ENCODE measurements at regions of chr9 and their contacts with region 1.

Region 1: GRCh38 chr9:100437860-100438805 is 11.2 kb downstream of the MSANTD3 start:
- DNase-seq: no peak
- ATAC-seq: peak; percentile 83
- H3K4me3 ChIP-seq: no peak overlapping the region
- H3K27ac ChIP-seq: no peak overlapping the region
- H3K4me1 ChIP-seq: no peaks in the 10 kb centered on the region
- H3K27me3 ChIP-seq: no peaks in the 10 kb centered on the region
- CTCF ChIP-seq: peak; percentile 88 to 92 (median 91)
- EP300 ChIP-seq: no peak
- POLR2A ChIP-seq: no peak
- RAD21 ChIP-seq: peak; percentile 61

Region 2: DNA sequence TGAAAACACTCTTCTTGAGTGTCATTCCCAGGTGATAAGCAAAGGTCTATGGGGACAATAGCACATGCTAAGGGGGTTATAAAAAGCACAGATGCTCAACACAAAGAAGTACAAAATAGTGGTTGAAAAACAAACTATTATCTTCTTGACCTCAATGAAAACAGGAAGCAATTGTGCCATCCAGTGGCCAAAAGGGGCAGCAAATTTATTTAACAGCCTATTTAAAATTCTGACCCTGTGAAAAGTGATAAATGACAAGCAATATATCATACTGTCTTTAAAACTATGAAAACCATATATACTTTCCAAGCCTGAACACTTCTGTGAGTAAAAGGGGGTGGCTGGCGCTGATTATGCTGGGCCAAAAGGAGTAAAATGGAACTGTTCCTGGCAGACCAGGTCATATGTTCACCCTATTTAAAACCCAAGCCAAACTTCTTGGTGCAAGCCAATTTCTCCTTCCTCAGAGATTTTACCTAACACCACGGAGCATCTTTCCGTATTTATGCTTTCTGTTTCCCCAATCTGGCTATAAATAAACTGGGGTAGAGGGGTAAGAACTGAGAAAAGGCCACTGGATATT is 115.1 kb before region 1 on chr9:
- CTCF ChIA-PET with region 1: interaction called, 12 read pairs
- POLR2A ChIA-PET with region 1: no interaction called
- RAD21 ChIA-PET with region 1: interaction called, 5 read pairs
- SMC1A ChIA-PET with region 1: interaction called, 3 read pairs
- in situ Hi-C with region 1: no loop called
- intact Hi-C with region 1: no loop called
- DNase-seq: no peak
- ATAC-seq: peak; percentile 69
- H3K4me3 ChIP-seq: no peak overlapping the region
- H3K27ac ChIP-seq: no peak overlapping the region
- H3K4me1 ChIP-seq: no peaks in the 10 kb centered on the region
- H3K27me3 ChIP-seq: no peaks in the 10 kb centered on the region
- CTCF ChIP-seq: peak; percentile 55 to 74 (median 65)
- EP300 ChIP-seq: no peak
- POLR2A ChIP-seq: no peak
- RAD21 ChIP-seq: peak; percentile 65

Region 3: GRCh38 chr9:100346836-100347235 is 91.3 kb before region 1 on chr9:
- CTCF ChIA-PET with region 1: interaction called, 4 read pairs
- POLR2A ChIA-PET with region 1: no interaction called
- RAD21 ChIA-PET with region 1: no interaction called
- SMC1A ChIA-PET with region 1: interaction called, 10 read pairs
- in situ Hi-C with region 1: no loop called
- intact Hi-C with region 1: loop called (anchors 5 kb)
- DNase-seq: no peak
- ATAC-seq: no peak
- H3K4me3 ChIP-seq: peak overlapping the region; percentile 16; the same call in 1 of the 2 replicates
- H3K27ac ChIP-seq: no peak overlapping the region
- H3K4me1 ChIP-seq: no peaks in the 10 kb centered on the region; the same call in 1 of the 2 replicates
- H3K27me3 ChIP-seq: no peaks in the 10 kb centered on the region
- CTCF ChIP-seq: no peak
- EP300 ChIP-seq: no peak
- POLR2A ChIP-seq: no peak
- RAD21 ChIP-seq: no peak

Region 4: DNA sequence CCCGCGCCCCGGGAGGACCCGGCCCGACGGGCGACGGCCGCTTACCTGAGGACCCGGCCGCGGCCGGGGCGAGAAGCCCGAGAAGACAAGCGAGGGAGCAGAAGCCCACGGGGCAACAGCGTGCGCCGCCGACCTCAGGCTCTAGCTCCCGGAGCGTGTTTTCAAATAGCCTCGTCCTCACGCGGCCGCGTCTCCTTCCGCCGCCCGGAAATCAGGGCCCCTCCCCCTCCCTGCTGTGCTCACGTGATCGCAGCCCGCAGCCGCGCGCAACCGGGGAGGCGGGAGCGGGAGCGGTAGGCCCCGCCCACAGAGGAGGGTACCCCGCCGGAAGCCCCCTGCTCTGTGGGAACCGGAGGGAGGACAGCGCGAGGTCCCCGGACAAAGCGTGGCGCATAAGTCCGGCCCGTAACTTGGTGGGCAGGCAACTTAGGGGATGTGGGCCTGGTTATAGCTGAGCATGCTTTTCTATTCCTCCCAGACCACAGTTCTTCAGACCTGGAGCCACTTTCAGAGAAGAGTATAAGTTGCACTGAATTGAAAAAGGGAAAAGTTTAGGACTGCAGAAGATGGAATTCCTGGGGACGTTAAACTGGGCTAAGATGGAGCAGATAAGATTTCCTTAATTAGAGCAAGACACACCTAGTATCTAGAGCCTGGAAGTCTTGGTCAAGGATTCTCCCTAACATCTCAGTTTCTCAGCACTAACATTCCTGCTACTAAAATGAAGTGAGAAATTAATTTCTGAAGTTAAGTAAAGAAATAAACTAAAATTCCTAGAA is 85.2 kb before region 1 on chr9 and contains the start of gene TEX10:
- CTCF ChIA-PET with region 1: interaction called, 4 read pairs
- POLR2A ChIA-PET with region 1: no interaction called
- RAD21 ChIA-PET with region 1: no interaction called
- SMC1A ChIA-PET with region 1: interaction called, 10 read pairs
- in situ Hi-C with region 1: no loop called
- intact Hi-C with region 1: loop called (anchors 5 kb)
- DNase-seq: peak; percentile 57
- ATAC-seq: peak; percentile 85
- H3K4me3 ChIP-seq: peak within 1 kb of the TSS; percentile 95
- H3K27ac ChIP-seq: peak within 1 kb of the TSS; percentile 82
- H3K4me1 ChIP-seq: peaks cover 8% of the 10 kb centered on the region
- H3K27me3 ChIP-seq: no peaks in the 10 kb centered on the region
- CTCF ChIP-seq: no peak
- EP300 ChIP-seq: peak in 1 of 2 experiments; percentile 35; a peak in 1 of 4 replicates
- POLR2A ChIP-seq: peak; percentile 96
- RAD21 ChIP-seq: no peak
- polyA plus RNA-seq, gene TEX10: 17.4 to 25.8 TPM

Region 5: DNA sequence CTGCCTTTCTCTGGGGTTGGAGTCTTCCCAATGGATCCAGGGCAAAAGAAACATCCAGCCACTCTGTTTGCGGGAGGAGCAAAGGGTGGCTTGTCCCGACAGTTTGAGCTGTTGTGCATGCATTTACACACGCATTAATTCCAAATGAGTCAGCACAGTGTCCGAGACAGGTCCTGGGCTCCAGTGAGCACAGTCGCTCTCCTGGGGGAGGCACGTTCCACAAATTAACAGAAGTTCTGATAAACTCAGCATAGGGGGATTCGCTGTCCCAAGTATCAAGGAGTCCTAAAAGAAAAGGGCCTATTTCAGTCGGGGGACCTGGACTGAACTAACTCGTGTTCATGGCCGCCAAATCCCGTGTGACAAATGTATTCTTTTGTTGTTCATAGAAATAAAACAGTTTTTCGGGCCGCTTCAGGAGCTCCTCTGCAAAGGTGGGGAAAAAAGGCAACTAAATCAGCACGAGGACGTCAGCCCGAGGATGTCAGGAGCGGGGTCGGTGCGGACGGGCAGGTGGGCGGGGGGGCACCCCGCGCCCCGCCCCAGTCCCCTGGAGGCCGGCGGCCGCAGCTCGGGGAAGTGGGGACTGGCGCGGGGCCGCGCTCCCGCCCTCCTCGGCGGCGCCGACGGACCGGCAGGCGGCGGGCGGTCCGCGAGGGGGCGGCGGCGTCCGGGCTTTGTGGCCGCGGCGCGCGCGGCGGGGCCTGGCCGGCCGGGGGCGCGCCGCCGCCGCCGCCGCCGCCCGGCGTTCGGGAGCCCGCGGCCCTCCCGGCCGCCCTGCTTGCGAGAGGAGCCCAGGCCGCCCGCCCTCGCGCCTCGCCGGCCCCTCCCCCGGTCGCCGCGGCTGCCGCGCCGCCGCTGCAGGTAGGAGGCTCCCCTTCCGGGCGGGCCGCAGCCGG is 11.4 kb before region 1 on chr9 and contains the start of gene MSANTD3:
- CTCF ChIA-PET with region 1: interaction called, 19 read pairs
- POLR2A ChIA-PET with region 1: interaction called, 4 read pairs
- RAD21 ChIA-PET with region 1: interaction called, 3 read pairs
- SMC1A ChIA-PET with region 1: interaction called, 3 read pairs
- in situ Hi-C with region 1: no loop called
- intact Hi-C with region 1: no loop called
- DNase-seq: no peak
- ATAC-seq: peak; percentile 81
- H3K4me3 ChIP-seq: peak within 1 kb of the TSS; percentile 76
- H3K27ac ChIP-seq: 0 out of 2 replicates have a peak within 1 kb of the TSS, but pooled peaks have one; percentile 25
- H3K4me1 ChIP-seq: peaks cover 12% of the 10 kb centered on the region
- H3K27me3 ChIP-seq: no peaks in the 10 kb centered on the region
- CTCF ChIP-seq: peak in 1 of 3 experiments; percentile 18; a peak in 1 of 6 replicates
- EP300 ChIP-seq: no peak
- POLR2A ChIP-seq: no peak; the same call in 1 of the 2 replicates
- RAD21 ChIP-seq: no peak
- polyA plus RNA-seq, gene MSANTD3: 7.0 to 12.1 TPM

Region 6: DNA sequence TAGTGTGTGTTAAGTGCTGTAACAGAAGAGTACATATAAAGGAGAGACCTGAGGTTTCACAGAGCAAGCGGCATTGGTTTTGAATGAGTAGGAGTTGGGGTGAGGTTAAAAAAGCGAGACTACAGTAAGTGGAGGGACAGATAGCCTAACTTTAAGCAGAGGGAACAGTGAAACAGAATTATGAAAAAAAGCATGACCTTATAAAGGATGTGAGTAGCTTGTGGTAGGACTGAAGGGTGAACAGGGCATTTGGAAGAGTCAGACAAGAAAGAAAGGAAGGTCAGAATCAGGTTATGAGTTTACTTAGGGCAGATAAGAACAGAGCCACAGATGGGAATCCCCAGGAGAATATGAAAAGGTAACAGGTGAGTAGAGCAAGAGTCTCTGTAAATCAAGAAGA is 11.3 kb after region 1 on chr9:
- CTCF ChIA-PET with region 1: interaction called, 25 read pairs
- POLR2A ChIA-PET with region 1: no interaction called
- RAD21 ChIA-PET with region 1: no interaction called
- SMC1A ChIA-PET with region 1: no interaction called
- in situ Hi-C with region 1: no loop called
- intact Hi-C with region 1: no loop called
- DNase-seq: no peak
- ATAC-seq: peak; percentile 75
- H3K4me3 ChIP-seq: 0 out of 2 replicates have a peak overlapping the region, but pooled peaks have one; percentile 3
- H3K27ac ChIP-seq: no peak overlapping the region
- H3K4me1 ChIP-seq: peaks cover 14% of the 10 kb centered on the region
- H3K27me3 ChIP-seq: no peaks in the 10 kb centered on the region
- CTCF ChIP-seq: no peak
- EP300 ChIP-seq: no peak
- POLR2A ChIP-seq: no peak
- RAD21 ChIP-seq: no peak

Measured in GM12878 (cell line).